ENCODE measurements at regions of chr10 and their contacts with region 1.

Region 1: DNA sequence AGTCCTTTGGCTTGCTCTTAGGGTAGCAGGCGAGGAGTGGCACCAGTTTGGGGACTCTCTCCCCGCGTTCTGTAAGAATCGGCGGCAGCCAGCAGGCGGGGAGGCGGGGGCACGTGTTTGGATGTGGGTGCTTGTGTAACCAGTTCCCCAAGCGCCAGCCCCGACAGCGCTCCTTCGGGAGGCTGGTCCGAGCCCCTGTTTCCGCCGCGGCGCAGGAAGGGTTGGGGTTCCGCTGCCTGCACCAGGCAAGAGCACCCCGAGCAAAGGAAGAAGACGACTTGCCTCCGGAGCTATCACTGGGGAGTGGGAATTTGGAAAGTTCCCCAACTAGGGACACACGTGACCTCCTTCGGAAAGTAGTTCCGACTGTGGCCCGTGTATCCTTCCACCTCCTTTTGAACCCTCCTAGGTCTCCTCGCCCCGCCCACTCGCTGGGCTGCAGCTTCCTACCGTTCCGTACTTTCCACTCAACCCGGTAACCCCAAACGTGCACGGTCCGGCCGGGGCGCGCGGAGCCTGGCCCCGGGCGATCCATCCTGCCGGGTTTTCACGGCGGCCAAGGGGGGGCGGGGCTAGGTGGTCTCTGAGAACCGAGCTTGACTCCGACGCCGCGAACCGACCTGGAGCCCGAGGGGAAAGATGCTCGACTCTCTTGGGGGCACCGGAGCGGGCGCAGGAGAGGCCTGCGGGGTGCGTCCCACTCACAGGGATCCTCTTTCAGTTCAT is 1.2 kb downstream of the KLLN start:
- DNase-seq: peak; percentile 94
- ATAC-seq: peak; percentile 81
- H3K4me3 ChIP-seq: peak overlapping the region; percentile 67 to 97
- H3K27ac ChIP-seq: peak overlapping the region; percentile 93
- H3K4me1 ChIP-seq: peaks cover 12% of the 10 kb centered on the region
- H3K27me3 ChIP-seq: no peaks in the 10 kb centered on the region
- CTCF ChIP-seq: no peak

Region 2: DNA sequence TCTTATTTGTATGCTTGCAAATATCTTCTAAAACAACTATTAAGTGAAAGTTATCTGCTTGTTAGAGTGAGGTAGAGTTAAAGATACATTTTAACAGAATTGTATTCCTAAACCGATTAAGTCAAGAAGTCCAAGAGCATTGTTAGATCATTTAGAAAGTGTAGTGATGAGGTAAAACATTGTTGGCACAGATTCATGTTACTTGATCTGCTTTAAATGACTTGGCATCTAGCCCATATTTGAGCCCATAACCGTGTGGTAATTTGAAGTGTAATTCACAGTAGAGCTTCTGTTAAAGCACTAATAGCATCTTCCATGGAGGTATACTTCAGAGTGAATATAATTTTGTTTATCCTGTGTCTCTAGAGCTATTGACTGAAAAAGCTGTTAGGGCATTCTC is 63.5 kb after region 1 on chr10:
- CTCF ChIA-PET with region 1: no interaction called
- POLR2A ChIA-PET with region 1: no interaction called
- in situ Hi-C with region 1: no loop called
- intact Hi-C with region 1: no loop called
- DNase-seq: no peak
- ATAC-seq: no peak
- H3K4me3 ChIP-seq: no peak overlapping the region
- H3K27ac ChIP-seq: no peak overlapping the region
- H3K4me1 ChIP-seq: peaks cover 4% of the 10 kb centered on the region; the same call in 1 of the 2 replicates
- H3K27me3 ChIP-seq: no peaks in the 10 kb centered on the region
- CTCF ChIP-seq: no peak

Region 3: DNA sequence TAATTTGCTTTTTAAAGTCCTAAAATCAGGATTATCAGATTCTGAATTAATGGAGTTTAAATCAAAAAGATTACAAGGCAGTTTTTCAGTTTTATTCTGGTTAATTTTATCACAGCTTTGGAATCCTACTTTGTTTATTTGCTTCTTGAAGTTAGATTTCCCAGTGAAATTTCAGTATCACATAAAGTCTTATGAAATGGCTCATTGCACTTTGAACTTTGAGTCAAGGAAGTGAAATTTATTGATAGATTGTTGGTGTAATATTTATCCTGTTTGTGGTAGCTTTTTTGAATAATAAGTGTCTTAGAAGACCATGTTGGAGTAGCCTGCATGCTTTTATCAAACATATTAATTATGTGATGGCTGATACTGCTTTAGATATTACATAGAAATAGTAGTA is 93.9 kb after region 1 on chr10:
- CTCF ChIA-PET with region 1: no interaction called
- POLR2A ChIA-PET with region 1: no interaction called
- in situ Hi-C with region 1: no loop called
- intact Hi-C with region 1: loop called (anchors 5 kb)
- DNase-seq: no peak
- ATAC-seq: no peak
- H3K4me3 ChIP-seq: no peak overlapping the region
- H3K27ac ChIP-seq: no peak overlapping the region
- H3K4me1 ChIP-seq: peaks cover 9% of the 10 kb centered on the region
- H3K27me3 ChIP-seq: no peaks in the 10 kb centered on the region
- CTCF ChIP-seq: no peak

Region 4: DNA sequence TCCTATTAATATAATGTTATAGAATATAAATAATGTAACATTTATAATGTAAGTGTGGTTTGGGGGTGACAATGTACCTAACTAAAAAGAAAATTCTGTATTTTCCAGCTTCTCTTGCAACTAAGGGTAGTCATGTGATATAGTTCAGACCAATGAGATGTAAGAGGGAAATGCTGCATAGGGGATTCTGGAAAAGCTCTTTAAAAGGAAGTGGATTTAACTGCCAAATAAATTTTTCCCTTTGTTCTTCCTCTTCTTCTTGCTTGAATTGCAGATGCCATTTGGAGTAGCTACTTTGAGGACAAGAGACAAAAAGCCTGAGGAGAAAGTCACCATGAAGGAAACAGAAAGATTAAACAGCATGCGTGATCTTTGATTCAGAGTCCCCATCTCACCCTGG is 195.6 kb after region 1 on chr10:
- CTCF ChIA-PET with region 1: no interaction called
- POLR2A ChIA-PET with region 1: no interaction called
- in situ Hi-C with region 1: no loop called
- intact Hi-C with region 1: no loop called
- DNase-seq: no peak
- ATAC-seq: no peak
- H3K4me3 ChIP-seq: no peak overlapping the region
- H3K27ac ChIP-seq: no peak overlapping the region
- H3K4me1 ChIP-seq: no peaks in the 10 kb centered on the region
- H3K27me3 ChIP-seq: no peaks in the 10 kb centered on the region
- CTCF ChIP-seq: no peak

Region 5: GRCh38 chr10:88114368-88114767 is 252.3 kb after region 1 on chr10:
- CTCF ChIA-PET with region 1: no interaction called
- POLR2A ChIA-PET with region 1: no interaction called
- in situ Hi-C with region 1: no loop called
- intact Hi-C with region 1: loop called (anchors 2 kb)
- DNase-seq: peak; percentile 42
- ATAC-seq: peak; percentile 80
- H3K4me3 ChIP-seq: no peak overlapping the region
- H3K27ac ChIP-seq: no peak overlapping the region
- H3K4me1 ChIP-seq: no peaks in the 10 kb centered on the region
- H3K27me3 ChIP-seq: no peaks in the 10 kb centered on the region; the same call in 1 of the 2 replicates
- CTCF ChIP-seq: peak; percentile 79

Region 6: GRCh38 chr10:88243836-88244730 is 382.0 kb after region 1 on chr10:
- CTCF ChIA-PET with region 1: no interaction called
- POLR2A ChIA-PET with region 1: interaction called, 11 read pairs
- in situ Hi-C with region 1: no loop called
- intact Hi-C with region 1: no loop called
- DNase-seq: no peak
- ATAC-seq: peak; percentile 89
- H3K4me3 ChIP-seq: peak overlapping the region in 1 of 2 experiments; percentile 7; a peak in 2 of 4 replicates
- H3K27ac ChIP-seq: peak overlapping the region; percentile 75
- H3K4me1 ChIP-seq: peaks cover 20% of the 10 kb centered on the region
- H3K27me3 ChIP-seq: no peaks in the 10 kb centered on the region; the same call in 1 of the 2 replicates
- CTCF ChIP-seq: no peak

Region 7: DNA sequence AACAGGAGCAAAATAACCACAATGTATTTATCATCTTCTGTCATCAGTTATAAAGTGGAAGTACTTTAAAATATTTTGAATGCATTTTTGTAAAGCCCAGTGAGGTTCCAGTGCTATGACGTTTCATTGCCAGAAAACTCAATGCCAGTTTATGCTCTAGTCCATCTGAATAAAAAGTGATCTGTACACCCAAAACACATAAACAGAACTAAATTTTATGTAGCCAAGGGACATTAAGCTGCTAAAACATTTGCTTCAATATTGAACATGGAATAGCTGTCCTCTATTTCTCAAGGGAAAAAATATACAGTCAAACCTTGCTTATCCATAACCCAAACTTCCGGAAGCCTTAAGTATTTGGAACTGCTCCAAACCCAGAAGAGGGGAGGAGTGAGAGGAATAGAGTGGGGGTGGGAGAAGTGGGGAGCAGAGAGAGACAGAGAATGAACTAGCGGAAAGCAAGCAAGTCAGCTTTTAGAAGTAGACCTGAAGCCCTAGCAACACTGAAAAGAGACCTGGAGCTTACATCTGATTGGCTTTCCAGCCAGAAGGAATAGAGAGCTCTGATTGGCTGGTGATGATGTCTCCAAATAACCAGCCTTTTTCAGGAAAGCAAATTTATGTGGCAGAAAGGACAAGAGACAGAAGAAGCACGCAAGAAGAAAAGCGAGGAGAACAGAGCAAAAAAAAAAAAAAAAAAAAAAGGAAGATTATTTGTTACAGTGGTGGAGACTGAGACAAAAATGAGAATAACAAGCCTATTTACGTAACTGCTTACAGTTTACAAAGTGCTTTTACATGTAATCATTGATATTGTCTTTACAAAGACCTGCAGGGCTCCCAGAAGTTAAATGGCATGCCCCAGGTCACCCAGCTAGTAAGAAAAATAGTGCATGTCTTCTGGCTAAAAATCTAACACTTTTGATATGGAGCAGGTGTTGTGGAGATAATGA is 525.0 kb after region 1 on chr10:
- CTCF ChIA-PET with region 1: interaction called, 6 read pairs
- POLR2A ChIA-PET with region 1: no interaction called
- in situ Hi-C with region 1: no loop called
- intact Hi-C with region 1: loop called (anchors 2 kb)
- DNase-seq: no peak
- ATAC-seq: no peak
- H3K4me3 ChIP-seq: no peak overlapping the region
- H3K27ac ChIP-seq: no peak overlapping the region; the same call in 1 of the 2 replicates
- H3K4me1 ChIP-seq: peaks cover 11% of the 10 kb centered on the region
- H3K27me3 ChIP-seq: no peaks in the 10 kb centered on the region; the same call in 1 of the 2 replicates
- CTCF ChIP-seq: no peak

Measured in Panc1 (cell line).